Transverse colon (tissue), 4 donors: ENCODE measurements at regions of chr4 and their contacts with region 1.

Region 1: DNA sequence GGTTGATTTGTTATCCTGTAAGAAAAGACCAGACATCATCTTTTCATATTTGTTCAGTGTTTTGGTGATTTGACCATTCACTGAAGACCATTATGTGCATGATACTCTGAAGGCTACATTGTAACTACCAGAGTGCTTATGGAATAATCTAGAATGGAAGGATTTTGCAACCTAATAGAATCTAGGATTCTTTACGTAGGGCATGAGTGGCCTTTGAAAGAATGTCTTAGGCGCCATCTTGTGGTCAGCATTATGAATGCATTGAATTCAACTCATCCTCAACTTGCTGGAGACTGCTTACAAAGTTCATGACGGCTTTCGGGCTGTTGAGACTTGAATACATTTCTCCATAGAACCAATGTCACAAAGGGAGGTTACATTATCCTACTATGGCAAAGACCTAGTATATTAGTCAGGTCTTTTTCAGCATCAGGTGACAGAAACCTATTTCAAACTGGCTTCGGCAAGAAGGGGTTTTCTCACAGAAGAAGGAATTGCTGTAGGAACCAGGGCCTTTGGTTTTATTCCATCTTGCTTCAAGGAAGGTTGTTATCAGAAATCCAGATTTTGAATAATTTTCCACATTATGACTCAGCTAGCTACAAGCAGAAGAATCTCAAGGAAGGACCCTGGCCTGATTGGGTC is 104.1 kb downstream of the GPAT3 start:
- DNase-seq: peak; percentile 53
- H3K4me3 ChIP-seq: no peak overlapping the region
- H3K27ac ChIP-seq: no peak overlapping the region
- H3K4me1 ChIP-seq: peaks cover 0 to 8% (median 0%) of the 10 kb centered on the region in 4 donors
- H3K27me3 ChIP-seq: peaks cover 16% of the 10 kb centered on the region
- CTCF ChIP-seq: peak; percentile 79 to 89 (median 82)
- EP300 ChIP-seq: no peak
- POLR2A ChIP-seq: no peak

Region 2: GRCh38 chr4:83110223-83110945 is 529.6 kb before region 1 on chr4:
- in situ Hi-C with region 1: loop called in 1 of 4 experiments (anchors 25 kb)
- intact Hi-C with region 1: no loop called
- DNase-seq: peak; percentile 94
- H3K4me3 ChIP-seq: peak overlapping the region; percentile 27 to 67 (median 60)
- H3K27ac ChIP-seq: peak overlapping the region; percentile 81 to 93 (median 88)
- H3K4me1 ChIP-seq: peaks cover 0 to 37% (median 24%) of the 10 kb centered on the region in 4 donors
- H3K27me3 ChIP-seq: no peaks in the 10 kb centered on the region
- CTCF ChIP-seq: peak; percentile 52 to 70 (median 58)
- EP300 ChIP-seq: no peak
- POLR2A ChIP-seq: peak; percentile 45

Region 3: DNA sequence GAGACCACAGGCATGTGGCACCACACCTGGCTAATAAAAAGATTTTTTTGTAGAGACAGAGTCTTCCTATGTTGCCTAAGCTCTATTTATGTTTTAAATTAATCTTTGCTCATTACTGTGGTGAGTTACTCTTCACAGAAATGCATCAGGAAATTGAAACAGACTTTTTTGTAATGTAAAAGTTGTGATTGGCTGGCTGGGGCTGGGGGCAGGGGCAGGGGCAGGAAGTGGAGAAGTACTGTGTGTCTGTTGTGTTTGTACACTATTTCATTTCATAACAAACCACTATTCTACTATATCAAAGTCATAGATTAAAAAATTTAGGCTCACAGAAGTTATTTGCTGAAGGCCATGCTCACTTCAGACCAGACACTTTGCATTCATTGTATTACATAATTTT is 136.0 kb before region 1 on chr4:
- in situ Hi-C with region 1: no loop called
- intact Hi-C with region 1: loop called (anchors 2 kb)
- DNase-seq: no peak
- H3K4me3 ChIP-seq: no peak overlapping the region
- H3K27ac ChIP-seq: no peak overlapping the region
- H3K4me1 ChIP-seq: no peaks in the 10 kb centered on the region
- H3K27me3 ChIP-seq: no peaks in the 10 kb centered on the region
- CTCF ChIP-seq: no peak
- EP300 ChIP-seq: no peak
- POLR2A ChIP-seq: no peak

Region 4: GRCh38 chr4:83516042-83516772 is 123.8 kb before region 1 on chr4:
- in situ Hi-C with region 1: loop called in 3 of 4 experiments (anchors 10 kb)
- intact Hi-C with region 1: no loop called
- DNase-seq: no peak
- H3K4me3 ChIP-seq: no peak overlapping the region
- H3K27ac ChIP-seq: no peak overlapping the region
- H3K4me1 ChIP-seq: no peaks in the 10 kb centered on the region
- H3K27me3 ChIP-seq: no peaks in the 10 kb centered on the region
- CTCF ChIP-seq: no peak
- EP300 ChIP-seq: no peak
- POLR2A ChIP-seq: no peak

Region 5: DNA sequence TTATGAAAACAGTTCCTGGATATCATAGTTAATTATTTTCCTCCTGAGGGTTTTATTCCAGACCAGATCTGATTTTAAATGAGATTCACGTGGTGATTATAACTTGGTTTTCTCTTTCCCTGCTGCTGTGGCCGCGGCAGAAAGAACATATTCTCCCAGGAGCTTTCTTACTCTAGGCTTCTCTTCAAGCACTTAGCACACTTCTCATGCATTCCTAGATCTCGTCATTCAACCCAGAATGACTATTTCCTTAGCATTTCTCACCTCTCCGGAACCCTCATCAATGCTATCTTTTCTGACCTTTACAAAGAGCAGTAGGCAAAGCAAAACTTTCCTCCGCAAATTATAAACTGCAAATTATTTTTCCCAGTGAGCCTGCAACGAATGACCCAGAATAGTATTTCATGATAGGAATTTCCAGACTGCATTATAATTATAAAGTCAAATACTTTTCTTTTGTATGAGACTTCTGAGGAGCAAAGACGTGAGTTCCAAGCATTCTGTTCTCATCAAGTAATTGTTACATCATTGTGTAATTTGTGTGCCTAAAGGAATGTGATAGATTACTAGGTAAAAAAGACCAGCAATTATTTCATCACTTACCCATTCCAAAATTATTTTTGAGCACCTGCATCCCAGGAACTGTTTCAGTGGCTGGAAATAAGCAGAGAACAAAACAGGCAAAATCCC is 19.0 kb after region 1 on chr4:
- in situ Hi-C with region 1: no loop called
- intact Hi-C with region 1: no loop called
- DNase-seq: no peak
- H3K4me3 ChIP-seq: no peak overlapping the region
- H3K27ac ChIP-seq: no peak overlapping the region
- H3K4me1 ChIP-seq: no peaks in the 10 kb centered on the region
- H3K27me3 ChIP-seq: no peaks in the 10 kb centered on the region
- CTCF ChIP-seq: no peak
- EP300 ChIP-seq: no peak
- POLR2A ChIP-seq: no peak